Calu3 (cell line): ENCODE measurements at regions of chr3 and their contacts with region 1.

Region 1: DNA sequence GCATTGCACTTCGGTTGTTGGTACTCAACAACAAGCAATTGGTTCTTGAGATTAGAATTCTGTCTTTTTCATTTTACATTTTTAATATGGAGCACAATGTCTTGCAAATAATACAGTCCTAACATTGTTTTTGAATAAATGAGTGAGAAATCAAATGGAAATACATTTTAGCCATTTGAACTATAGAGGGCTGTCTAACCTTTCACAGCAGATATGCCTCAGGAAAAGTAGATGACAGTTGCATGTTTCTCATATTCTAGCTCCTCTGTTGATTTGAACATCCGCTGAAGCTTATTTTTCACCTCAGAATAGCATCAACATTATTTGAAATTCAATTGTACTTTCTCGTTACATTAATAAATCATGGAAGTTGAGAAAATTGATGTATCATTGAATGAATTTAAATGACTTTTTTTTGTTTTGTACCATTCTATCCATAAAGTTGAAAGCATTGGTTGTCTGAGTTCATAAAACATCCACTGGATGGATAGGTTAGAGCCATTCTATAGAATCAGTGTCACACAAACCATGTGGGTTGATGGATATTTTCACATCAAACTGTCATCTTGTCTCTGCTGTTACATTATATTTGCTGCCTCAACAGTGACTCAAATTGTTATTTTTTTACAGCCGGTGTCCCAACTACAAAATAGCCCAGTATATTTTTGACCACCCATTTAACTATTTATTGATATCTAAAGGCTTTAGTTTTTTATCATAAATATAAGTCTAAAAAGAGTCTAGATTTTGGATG is 928.3 kb downstream of the NSUN3 start:
- DNase-seq: no peak
- H3K4me3 Mint-ChIP-seq: no peak overlapping the region
- H3K27ac Mint-ChIP-seq: no peak overlapping the region
- H3K4me1 Mint-ChIP-seq: no peaks in the 10 kb centered on the region
- H3K27me3 Mint-ChIP-seq: no peaks in the 10 kb centered on the region
- CTCF ChIP-seq: no peak

Region 2: DNA sequence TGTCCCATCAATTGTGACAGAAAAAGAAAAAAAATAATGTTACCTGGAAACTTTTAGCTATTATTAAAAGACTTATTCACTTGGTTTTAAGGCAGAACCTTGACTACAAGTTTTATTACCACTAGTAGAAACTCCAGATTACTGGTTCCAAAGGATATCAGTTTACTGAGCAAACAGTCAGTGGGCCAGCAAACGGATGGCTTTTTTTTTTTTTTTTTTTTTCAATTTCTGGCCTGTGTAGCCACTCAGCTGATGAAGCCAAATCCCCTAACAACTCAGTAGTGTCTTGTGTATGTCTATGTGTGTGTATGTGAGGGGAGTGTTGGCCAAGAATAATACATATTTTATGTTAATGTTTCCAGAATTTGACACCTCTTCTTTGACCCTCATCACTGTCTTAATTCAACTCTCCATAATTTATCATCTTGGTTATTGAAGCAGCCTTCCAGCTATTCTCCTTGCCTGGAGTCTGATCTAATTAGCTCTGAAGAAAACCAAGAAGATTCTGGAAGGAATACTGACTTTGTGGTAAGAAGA is 203.3 kb before region 1 on chr3:
- CTCF ChIA-PET with region 1: no interaction called
- intact Hi-C with region 1: no loop called
- DNase-seq: no peak
- H3K4me3 Mint-ChIP-seq: no peak overlapping the region
- H3K27ac Mint-ChIP-seq: no peak overlapping the region
- H3K4me1 Mint-ChIP-seq: no peaks in the 10 kb centered on the region
- H3K27me3 Mint-ChIP-seq: no peaks in the 10 kb centered on the region
- CTCF ChIP-seq: no peak

Region 3: GRCh38 chr3:94978084-94978483 is 13.0 kb before region 1 on chr3:
- CTCF ChIA-PET with region 1: no interaction called
- intact Hi-C with region 1: no loop called
- DNase-seq: no peak
- H3K4me3 Mint-ChIP-seq: no peak overlapping the region
- H3K27ac Mint-ChIP-seq: no peak overlapping the region
- H3K4me1 Mint-ChIP-seq: no peaks in the 10 kb centered on the region
- H3K27me3 Mint-ChIP-seq: no peaks in the 10 kb centered on the region
- CTCF ChIP-seq: no peak

Region 4: GRCh38 chr3:95341314-95341713 is 350.2 kb after region 1 on chr3:
- CTCF ChIA-PET with region 1: no interaction called
- intact Hi-C with region 1: loop called (anchors 10 kb)
- DNase-seq: peak; percentile 51
- H3K4me3 Mint-ChIP-seq: no peak overlapping the region
- H3K27ac Mint-ChIP-seq: no peak overlapping the region
- H3K4me1 Mint-ChIP-seq: peaks cover 46% of the 10 kb centered on the region
- H3K27me3 Mint-ChIP-seq: no peaks in the 10 kb centered on the region
- CTCF ChIP-seq: no peak

Region 5: GRCh38 chr3:95752199-95752598 is 761.1 kb after region 1 on chr3:
- CTCF ChIA-PET with region 1: no interaction called
- intact Hi-C with region 1: loop called (anchors 2 kb)
- DNase-seq: peak; percentile 37
- H3K4me3 Mint-ChIP-seq: no peak overlapping the region
- H3K27ac Mint-ChIP-seq: no peak overlapping the region
- H3K4me1 Mint-ChIP-seq: no peaks in the 10 kb centered on the region
- H3K27me3 Mint-ChIP-seq: no peaks in the 10 kb centered on the region
- CTCF ChIP-seq: no peak

Region 6: GRCh38 chr3:96012939-96013338 is 1021.8 kb after region 1 on chr3:
- CTCF ChIA-PET with region 1: no interaction called
- intact Hi-C with region 1: loop called (anchors 5 kb)
- DNase-seq: no peak
- H3K4me3 Mint-ChIP-seq: no peak overlapping the region
- H3K27ac Mint-ChIP-seq: no peak overlapping the region
- H3K4me1 Mint-ChIP-seq: no peaks in the 10 kb centered on the region
- H3K27me3 Mint-ChIP-seq: no peaks in the 10 kb centered on the region
- CTCF ChIP-seq: no peak